T-cell (primary cell): ENCODE measurements at regions of chr5 and their contacts with region 1.

Region 1: DNA sequence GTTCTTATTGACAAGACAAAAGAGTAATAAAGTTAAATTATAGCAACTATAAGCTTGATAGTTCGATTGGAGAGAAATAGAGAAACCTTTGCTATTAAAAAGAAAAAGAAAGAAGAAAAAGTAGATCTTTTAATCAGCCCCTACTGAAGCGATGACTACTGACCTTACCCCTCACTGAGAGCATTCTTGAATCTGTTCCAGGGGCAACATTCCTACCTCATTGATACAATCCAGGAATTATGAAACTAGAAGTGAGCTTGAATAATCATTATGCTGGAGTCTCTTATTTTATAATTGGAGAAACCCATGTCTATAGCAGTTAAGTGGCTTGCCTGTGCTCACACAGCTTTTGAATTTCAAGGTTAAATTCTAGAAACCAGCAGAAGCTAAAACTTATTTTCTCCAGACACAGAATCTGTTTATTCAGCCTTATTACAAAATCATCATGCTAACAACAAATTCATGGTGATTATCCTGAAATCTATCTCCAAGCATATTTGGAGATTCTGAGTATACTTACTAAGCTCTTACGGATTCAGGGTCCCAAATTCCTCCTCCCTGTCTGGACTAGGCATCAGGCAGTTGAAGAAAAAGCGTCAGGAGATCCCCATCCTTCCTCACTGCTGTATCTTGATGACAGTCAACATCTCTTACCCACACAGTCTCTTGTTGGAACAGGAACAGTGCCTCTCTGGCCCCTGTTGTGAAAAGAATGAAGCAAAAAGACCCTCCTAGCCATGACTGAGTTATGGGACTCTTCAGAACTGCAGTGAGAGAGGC is 547.6 kb upstream of the WWC1 start:
- DNase-seq: no peak
- ATAC-seq: no peak
- H3K4me3 ChIP-seq: no peak overlapping the region
- H3K4me3 Mint-ChIP-seq: no peak overlapping the region
- H3K27ac ChIP-seq: no peak overlapping the region
- H3K27ac Mint-ChIP-seq: no peak overlapping the region
- H3K4me1 ChIP-seq: no peaks in the 10 kb centered on the region
- H3K4me1 Mint-ChIP-seq: no peaks in the 10 kb centered on the region
- H3K27me3 ChIP-seq: no peaks in the 10 kb centered on the region
- H3K27me3 Mint-ChIP-seq: no peaks in the 10 kb centered on the region

Region 2: DNA sequence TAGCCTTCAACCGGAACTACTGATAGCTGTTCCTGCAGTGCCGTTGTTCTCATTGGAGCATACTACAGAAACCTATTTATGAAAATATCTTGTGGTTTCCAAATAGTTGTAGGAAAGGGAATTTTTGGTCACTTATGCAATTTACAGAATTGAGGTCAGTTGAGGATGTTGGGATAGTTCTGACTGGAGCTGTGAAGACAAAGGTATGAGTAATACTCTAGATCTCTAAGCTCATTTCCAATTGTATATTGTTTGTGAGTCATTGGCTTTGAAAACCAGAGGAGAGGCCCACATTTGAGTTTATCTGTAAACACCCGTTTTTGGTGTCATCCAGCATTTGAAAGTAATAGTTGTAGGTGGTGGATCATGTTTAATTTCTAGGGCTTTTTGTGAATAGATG is 13.8 kb before region 1 on chr5:
- CTCF ChIA-PET with region 1: no interaction called
- POLR2A ChIA-PET with region 1: interaction called in 1 of 2 experiments, 11 read pairs
- DNase-seq: no peak
- ATAC-seq: no peak
- H3K4me3 ChIP-seq: no peak overlapping the region
- H3K4me3 Mint-ChIP-seq: no peak overlapping the region
- H3K27ac ChIP-seq: no peak overlapping the region
- H3K27ac Mint-ChIP-seq: no peak overlapping the region
- H3K4me1 ChIP-seq: no peaks in the 10 kb centered on the region
- H3K4me1 Mint-ChIP-seq: no peaks in the 10 kb centered on the region
- H3K27me3 ChIP-seq: no peaks in the 10 kb centered on the region
- H3K27me3 Mint-ChIP-seq: no peaks in the 10 kb centered on the region

Region 3: DNA sequence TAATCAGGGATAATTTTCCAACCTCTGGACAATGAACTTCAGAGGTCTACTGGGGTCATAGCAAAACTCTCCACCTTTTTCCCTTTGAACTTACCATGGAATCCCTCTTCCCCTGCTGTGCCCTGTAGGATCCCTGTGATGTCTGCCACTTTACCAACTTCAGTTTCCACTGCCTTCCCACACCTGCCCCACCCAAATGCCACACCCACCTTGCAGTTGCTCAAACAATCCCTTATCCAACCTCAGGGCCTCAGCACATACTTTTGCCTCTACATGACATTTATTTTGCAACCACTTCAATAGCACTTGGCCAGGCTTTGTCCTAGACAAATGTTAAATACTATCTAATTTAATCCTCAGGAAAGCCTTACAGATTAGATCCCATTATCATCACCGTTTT is 83.9 kb after region 1 on chr5:
- CTCF ChIA-PET with region 1: no interaction called
- POLR2A ChIA-PET with region 1: no interaction called
- DNase-seq: no peak
- ATAC-seq: no peak
- H3K4me3 ChIP-seq: no peak overlapping the region
- H3K4me3 Mint-ChIP-seq: no peak overlapping the region
- H3K27ac ChIP-seq: no peak overlapping the region
- H3K27ac Mint-ChIP-seq: no peak overlapping the region
- H3K4me1 ChIP-seq: no peaks in the 10 kb centered on the region
- H3K4me1 Mint-ChIP-seq: no peaks in the 10 kb centered on the region
- H3K27me3 ChIP-seq: no peaks in the 10 kb centered on the region
- H3K27me3 Mint-ChIP-seq: no peaks in the 10 kb centered on the region